WTC11 (cell line): ENCODE measurements at regions of chr5 and their contacts with region 1.

Region 1: DNA sequence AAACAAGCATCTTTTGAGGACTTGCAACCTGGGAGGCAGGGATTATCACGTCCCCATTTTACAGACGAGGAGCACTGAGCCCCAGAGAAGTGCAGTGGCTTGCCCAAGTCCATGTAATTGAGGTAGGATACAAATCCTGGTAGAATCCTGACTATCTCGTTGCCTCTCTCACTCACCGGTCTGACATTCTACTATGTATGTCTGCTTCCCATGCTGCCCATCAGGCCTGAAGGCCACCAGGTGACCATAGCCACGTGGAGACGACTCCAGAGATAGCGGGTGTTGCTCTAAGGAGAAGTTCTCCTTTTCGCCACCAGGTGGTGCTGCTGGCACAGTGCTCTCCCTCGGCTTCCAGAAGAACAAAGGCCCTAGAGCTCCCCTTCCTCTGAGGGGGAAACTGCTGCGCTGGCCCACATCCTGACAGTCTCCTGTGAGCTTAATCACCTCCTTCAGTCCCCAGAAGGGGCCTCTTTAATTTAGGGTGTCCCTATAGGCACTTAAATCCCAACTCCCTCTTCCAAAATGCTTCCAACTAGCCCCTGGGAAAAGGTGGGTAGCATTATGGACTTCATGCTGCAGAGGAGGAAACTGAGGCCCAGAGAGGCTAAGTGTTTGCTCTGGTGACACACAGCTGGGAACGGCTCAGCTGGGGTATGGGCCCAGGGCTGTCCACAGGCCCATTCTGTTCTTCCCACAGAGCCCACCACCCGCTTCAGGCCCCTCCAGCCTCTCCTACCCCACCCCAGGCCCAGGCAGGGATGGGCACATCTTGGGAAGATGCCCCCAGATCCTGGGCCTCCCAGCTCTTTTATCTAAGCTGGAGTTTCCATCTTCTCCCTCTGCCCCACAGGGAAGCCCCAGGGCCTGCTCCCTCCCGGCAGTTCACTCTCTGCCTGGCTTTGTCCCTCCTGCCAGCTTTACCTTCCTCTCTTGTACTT is 6.4 kb downstream of the SLC34A1 start:
- DNase-seq: peak; percentile 93
- ATAC-seq: peak; percentile 88
- H3K4me3 Mint-ChIP-seq: no peak overlapping the region
- H3K27ac Mint-ChIP-seq: no peak overlapping the region
- H3K4me1 Mint-ChIP-seq: peaks cover 32% of the 10 kb centered on the region
- H3K27me3 Mint-ChIP-seq: peaks cover 31% of the 10 kb centered on the region
- CTCF ChIP-seq: peak; percentile 98

Region 2: DNA sequence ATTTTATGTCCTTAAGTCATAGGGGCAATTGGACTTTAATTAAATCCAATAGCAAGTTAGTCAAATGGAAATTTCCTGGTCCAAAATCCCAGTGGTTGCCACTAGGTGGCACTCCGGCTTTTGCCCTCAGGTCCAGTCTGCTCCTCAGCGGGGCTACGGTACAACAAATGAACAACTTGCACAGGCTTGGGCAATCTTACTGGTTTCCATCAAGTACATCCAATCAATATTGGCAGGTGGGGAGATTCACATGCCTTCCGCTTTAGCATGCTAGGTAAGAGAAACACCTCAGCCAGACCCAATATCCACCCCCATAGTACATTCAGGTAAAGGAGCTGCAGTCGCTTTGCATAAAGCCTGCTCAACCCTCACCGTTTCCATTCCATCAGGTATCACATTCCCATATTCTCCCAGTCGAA is 72.7 kb before region 1 on chr5:
- CTCF ChIA-PET with region 1: interaction called, 24 read pairs
- POLR2A ChIA-PET with region 1: interaction called, 3 read pairs
- DNase-seq: peak; percentile 83
- ATAC-seq: peak; percentile 57
- H3K4me3 Mint-ChIP-seq: peak overlapping the region; percentile 17; the same call in 1 of the 2 replicates
- H3K27ac Mint-ChIP-seq: peak overlapping the region; percentile 70
- H3K4me1 Mint-ChIP-seq: peaks cover 11% of the 10 kb centered on the region
- H3K27me3 Mint-ChIP-seq: no peaks in the 10 kb centered on the region
- CTCF ChIP-seq: peak; percentile 72

Region 3: GRCh38 chr5:177409043-177409801 is 18.6 kb after region 1 on chr5 and contains the start of gene F12:
- CTCF ChIA-PET with region 1: interaction called, 202 read pairs
- POLR2A ChIA-PET with region 1: no interaction called
- DNase-seq: no peak
- ATAC-seq: no peak
- H3K4me3 Mint-ChIP-seq: no peak within 1 kb of the TSS
- H3K27ac Mint-ChIP-seq: no peak within 1 kb of the TSS
- H3K4me1 Mint-ChIP-seq: no peaks in the 10 kb centered on the region
- H3K27me3 Mint-ChIP-seq: peaks cover 88% of the 10 kb centered on the region
- CTCF ChIP-seq: no peak
- total RNA-seq, gene F12: 10.0 to 12.8 TPM (median 12.1 TPM) in 3 replicates

Region 4: GRCh38 chr5:177414481-177414880 is 23.8 kb after region 1 on chr5:
- CTCF ChIA-PET with region 1: interaction called, 16 read pairs
- POLR2A ChIA-PET with region 1: no interaction called
- DNase-seq: no peak
- ATAC-seq: no peak
- H3K4me3 Mint-ChIP-seq: no peak overlapping the region
- H3K27ac Mint-ChIP-seq: no peak overlapping the region
- H3K4me1 Mint-ChIP-seq: no peaks in the 10 kb centered on the region
- H3K27me3 Mint-ChIP-seq: peaks cover 54% of the 10 kb centered on the region
- CTCF ChIP-seq: no peak

Region 5: GRCh38 chr5:177425801-177426565 is 35.4 kb after region 1 on chr5:
- CTCF ChIA-PET with region 1: interaction called, 86 read pairs
- POLR2A ChIA-PET with region 1: interaction called, 8 read pairs
- DNase-seq: peak; percentile 100
- ATAC-seq: peak; percentile 94
- H3K4me3 Mint-ChIP-seq: peak overlapping the region; percentile 84
- H3K27ac Mint-ChIP-seq: peak overlapping the region; percentile 98
- H3K4me1 Mint-ChIP-seq: peaks cover 18% of the 10 kb centered on the region
- H3K27me3 Mint-ChIP-seq: peaks cover 5% of the 10 kb centered on the region
- CTCF ChIP-seq: no peak

Region 6: GRCh38 chr5:177446200-177447065 is 55.8 kb after region 1 on chr5 and contains the start of gene PRR7:
- CTCF ChIA-PET with region 1: interaction called, 174 read pairs
- POLR2A ChIA-PET with region 1: interaction called, 6 read pairs
- DNase-seq: peak; percentile 60
- ATAC-seq: peak; percentile 14
- H3K4me3 Mint-ChIP-seq: peak within 1 kb of the TSS; percentile 66
- H3K27ac Mint-ChIP-seq: no peak within 1 kb of the TSS
- H3K4me1 Mint-ChIP-seq: peaks cover 44% of the 10 kb centered on the region
- H3K27me3 Mint-ChIP-seq: peaks cover 41% of the 10 kb centered on the region
- CTCF ChIP-seq: no peak
- total RNA-seq, gene PRR7: 13.1 to 14.7 TPM (median 14.6 TPM) in 3 replicates

Region 7: GRCh38 chr5:177497292-177498033 is 106.8 kb after region 1 on chr5 and contains the start of gene PDLIM7:
- CTCF ChIA-PET with region 1: interaction called, 29 read pairs
- POLR2A ChIA-PET with region 1: no interaction called
- DNase-seq: peak; percentile 97
- ATAC-seq: peak; percentile 71
- H3K4me3 Mint-ChIP-seq: peak within 1 kb of the TSS; percentile 80
- H3K27ac Mint-ChIP-seq: peak within 1 kb of the TSS; percentile 92; the same call in 1 of the 2 replicates
- H3K4me1 Mint-ChIP-seq: peaks cover 36% of the 10 kb centered on the region
- H3K27me3 Mint-ChIP-seq: peaks cover 31% of the 10 kb centered on the region
- CTCF ChIP-seq: no peak
- total RNA-seq, gene PDLIM7: 124 to 142 TPM (median 139 TPM) in 3 replicates